ENCODE measurements at regions of chr1 and their contacts with region 1.

Region 1: DNA sequence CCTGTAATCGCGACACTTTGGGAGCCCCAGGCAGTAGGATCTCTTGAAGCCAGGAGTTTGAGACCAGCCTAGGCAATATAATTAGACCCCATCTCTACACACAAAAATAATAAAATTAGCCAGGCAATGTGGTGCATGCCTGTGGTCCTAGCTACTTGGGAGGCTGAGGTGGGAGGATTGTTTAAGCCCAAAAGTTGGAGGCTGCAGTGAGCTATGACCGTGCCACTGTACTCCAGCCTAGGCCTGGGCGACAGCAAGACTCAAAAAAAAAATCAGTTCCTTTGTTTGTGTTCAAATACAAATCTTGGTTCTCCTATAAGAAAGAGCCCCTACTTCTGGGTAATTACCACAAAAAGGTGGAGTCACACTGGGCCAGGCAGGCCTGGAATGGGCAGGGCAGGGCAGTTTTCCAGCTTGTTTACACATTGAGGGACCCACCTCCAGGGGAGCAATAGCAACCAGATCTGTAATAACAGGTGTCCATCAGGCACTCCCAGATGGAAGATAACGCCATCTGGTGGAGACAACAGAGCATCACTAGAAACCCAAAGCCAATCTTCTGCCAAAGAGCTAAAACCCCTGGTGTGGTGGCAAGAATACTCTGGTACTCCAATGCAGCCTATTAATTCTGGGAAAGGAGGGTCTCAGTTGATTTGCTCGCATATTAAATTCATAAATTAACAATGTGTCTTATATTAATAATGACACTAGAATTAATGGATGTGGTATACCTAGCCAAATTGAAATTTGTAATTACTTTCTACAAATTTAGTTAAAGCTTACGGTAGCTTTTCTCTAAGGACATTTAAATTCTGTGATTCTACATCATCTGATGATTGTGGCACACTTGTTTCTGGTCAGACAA is 13.2 kb downstream of the PPP1R15B start:
- DNase-seq: peak; percentile 74 to 82
- H3K4me3 ChIP-seq: no peak overlapping the region
- H3K27ac ChIP-seq: no peak overlapping the region; the same call in 1 of the 2 replicates
- H3K4me1 ChIP-seq: no peaks in the 10 kb centered on the region
- H3K27me3 ChIP-seq: no peaks in the 10 kb centered on the region
- CTCF ChIP-seq: peak; percentile 26 to 98 (median 96)
- EP300 ChIP-seq: peak in 1 of 2 experiments; percentile 57; a peak in 1 of 3 replicates
- POLR2A ChIP-seq: no peak
- RAD21 ChIP-seq: peak; percentile 67 to 84

Region 2: GRCh38 chr1:204368996-204369726 is 29.3 kb before region 1 on chr1:
- CTCF ChIA-PET with region 1: interaction called, 18 read pairs
- POLR2A ChIA-PET with region 1: interaction called, 3 read pairs
- DNase-seq: no peak
- H3K4me3 ChIP-seq: no peak overlapping the region
- H3K27ac ChIP-seq: no peak overlapping the region
- H3K4me1 ChIP-seq: no peaks in the 10 kb centered on the region
- H3K27me3 ChIP-seq: peaks cover 0 to 4% (median 0%) of the 10 kb centered on the region in 4 experiments; a peak in 1 of 7 replicates
- CTCF ChIP-seq: no peak
- EP300 ChIP-seq: no peak
- POLR2A ChIP-seq: no peak
- RAD21 ChIP-seq: no peak

Region 3: GRCh38 chr1:204377795-204378608 is 20.4 kb before region 1 on chr1:
- CTCF ChIA-PET with region 1: interaction called, 31 read pairs
- POLR2A ChIA-PET with region 1: interaction called, 6 read pairs
- DNase-seq: peak in 1 of 2 experiments; percentile 92
- H3K4me3 ChIP-seq: peak overlapping the region; percentile 46 to 87 (median 67)
- H3K27ac ChIP-seq: no peak overlapping the region
- H3K4me1 ChIP-seq: peaks cover 0 to 4% (median 1%) of the 10 kb centered on the region in 4 experiments; a peak in 6 of 7 replicates
- H3K27me3 ChIP-seq: peaks cover 5 to 52% (median 27%) of the 10 kb centered on the region in 4 experiments
- CTCF ChIP-seq: no peak
- EP300 ChIP-seq: no peak
- POLR2A ChIP-seq: peak in 1 of 2 experiments; percentile 25; a peak in 1 of 3 replicates
- RAD21 ChIP-seq: no peak

Region 4: GRCh38 chr1:204384994-204385352 is 13.5 kb before region 1 on chr1:
- CTCF ChIA-PET with region 1: interaction called, 48 read pairs
- POLR2A ChIA-PET with region 1: interaction called, 6 read pairs
- DNase-seq: peak in 1 of 2 experiments; percentile 45
- H3K4me3 ChIP-seq: no peak overlapping the region
- H3K27ac ChIP-seq: no peak overlapping the region
- H3K4me1 ChIP-seq: no peaks in the 10 kb centered on the region; a peak in 1 of 7 replicates
- H3K27me3 ChIP-seq: peaks cover 0 to 6% (median 2%) of the 10 kb centered on the region in 4 experiments; a peak in 5 of 7 replicates
- CTCF ChIP-seq: no peak
- EP300 ChIP-seq: no peak
- POLR2A ChIP-seq: no peak
- RAD21 ChIP-seq: no peak

Region 5: DNA sequence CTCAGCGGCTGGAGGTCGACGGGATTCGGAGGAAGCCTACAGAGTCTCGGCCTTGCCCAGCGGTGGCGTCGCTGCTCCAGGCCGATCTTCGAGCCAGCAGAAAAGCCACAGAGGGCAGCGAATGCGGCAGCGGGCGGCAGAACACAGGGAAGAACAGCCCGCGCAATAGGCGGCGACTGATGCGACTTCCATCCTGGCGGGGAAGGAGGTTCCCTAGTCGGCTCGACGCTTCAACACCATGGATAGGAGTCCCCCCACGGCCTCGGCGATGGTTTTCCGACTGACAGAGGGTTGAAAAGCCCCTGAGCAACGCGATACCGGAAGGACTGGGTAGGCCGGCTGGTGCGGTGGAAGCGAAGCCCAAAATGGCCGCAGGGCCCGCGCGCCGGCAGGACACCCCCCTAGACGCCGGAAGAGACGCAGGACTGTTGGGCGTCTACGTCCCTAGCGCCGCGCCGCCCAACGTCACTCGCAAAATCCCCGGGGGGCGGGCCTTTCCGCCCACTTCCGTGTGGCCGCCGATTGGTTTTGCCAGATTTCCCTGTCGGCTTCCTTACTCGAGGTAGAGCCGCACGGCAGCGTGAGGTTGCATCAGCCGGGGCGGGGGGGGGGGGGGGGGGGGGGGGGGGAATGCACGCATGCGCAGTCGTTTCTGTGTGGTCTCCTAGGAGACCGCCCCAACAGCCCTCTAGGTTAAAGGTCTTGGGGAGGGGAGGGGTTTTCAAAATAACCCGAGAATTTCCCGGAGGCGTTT is 13.2 kb after region 1 on chr1 and contains the start of gene PPP1R15B:
- CTCF ChIA-PET with region 1: interaction called, 36 read pairs
- POLR2A ChIA-PET with region 1: interaction called, 30 read pairs
- DNase-seq: peak; percentile 96 to 100
- H3K4me3 ChIP-seq: peak within 1 kb of the TSS; percentile 63 to 97 (median 95)
- H3K27ac ChIP-seq: peak within 1 kb of the TSS; percentile 95
- H3K4me1 ChIP-seq: peaks cover 0 to 2% (median 0%) of the 10 kb centered on the region in 4 experiments; a peak in 3 of 7 replicates
- H3K27me3 ChIP-seq: no peaks in the 10 kb centered on the region
- CTCF ChIP-seq: no peak
- EP300 ChIP-seq: peak; percentile 85 to 88
- POLR2A ChIP-seq: peak; percentile 77 to 95
- RAD21 ChIP-seq: no peak
- total RNA-seq, gene PPP1R15B: 70.1 and 72.2 TPM in 2 replicates

Region 6: DNA sequence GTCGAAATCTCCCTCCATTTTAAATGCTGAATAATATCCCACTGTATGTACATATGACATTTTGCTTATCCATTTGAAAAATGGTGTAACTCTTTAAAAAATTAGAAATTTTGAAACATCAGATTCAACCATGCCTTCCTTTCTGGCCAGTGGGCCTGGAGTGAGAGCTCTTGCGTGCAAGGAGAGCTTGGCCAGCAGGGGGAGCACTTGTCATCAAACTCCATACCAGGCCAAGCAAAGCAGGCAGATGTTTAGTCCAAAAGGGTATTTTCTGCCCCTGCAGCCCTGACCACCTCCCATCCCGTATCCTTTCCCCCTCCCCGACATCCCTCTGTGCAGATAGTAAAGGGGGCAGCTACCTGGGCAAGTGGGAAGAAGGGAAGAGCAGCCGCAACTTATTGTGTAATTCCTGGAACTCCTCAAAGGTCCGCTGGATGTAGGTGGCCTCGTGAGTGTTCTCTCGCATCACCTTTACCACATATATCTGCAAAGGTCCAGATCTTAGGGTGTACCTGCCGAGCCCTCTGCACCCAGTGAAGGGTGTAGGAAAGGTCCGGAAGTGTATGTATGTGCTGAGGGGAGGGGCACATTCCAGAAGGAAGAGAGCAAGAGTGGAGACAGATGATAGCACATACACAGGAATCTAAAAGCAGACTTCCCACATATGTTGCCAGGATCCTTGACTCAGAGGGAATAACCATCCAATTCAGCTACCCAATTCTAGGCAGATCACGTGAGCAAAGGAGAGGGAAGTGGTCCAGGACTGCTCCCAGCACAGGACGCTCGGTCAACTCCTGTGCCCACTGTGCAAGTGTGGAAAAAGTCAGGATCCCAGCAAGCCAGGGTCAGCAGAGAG is 33.1 kb after region 1 on chr1:
- CTCF ChIA-PET with region 1: interaction called, 10 read pairs
- POLR2A ChIA-PET with region 1: no interaction called
- DNase-seq: peak; percentile 62 to 96
- H3K4me3 ChIP-seq: no peak overlapping the region
- H3K27ac ChIP-seq: no peak overlapping the region
- H3K4me1 ChIP-seq: 0 out of 7 replicates have a peak, but pooled peaks cover 0 to 2% (median 0%) of the 10 kb centered on the region in 4 experiments
- H3K27me3 ChIP-seq: no peaks in the 10 kb centered on the region
- CTCF ChIP-seq: peak; percentile 84 to 95 (median 91)
- EP300 ChIP-seq: no peak
- POLR2A ChIP-seq: no peak
- RAD21 ChIP-seq: peak; percentile 61 to 68

Region 7: GRCh38 chr1:204565617-204566582 is 167.5 kb after region 1 on chr1:
- CTCF ChIA-PET with region 1: no interaction called
- POLR2A ChIA-PET with region 1: no interaction called
- DNase-seq: peak in 1 of 2 experiments; percentile 63
- H3K4me3 ChIP-seq: peak overlapping the region in 1 of 4 experiments; percentile 34; a peak in 2 of 8 replicates
- H3K27ac ChIP-seq: peak overlapping the region; percentile 4; the same call in 1 of the 2 replicates
- H3K4me1 ChIP-seq: peaks cover 3 to 24% (median 13%) of the 10 kb centered on the region in 4 experiments; a peak in 6 of 7 replicates
- H3K27me3 ChIP-seq: no peaks in the 10 kb centered on the region; a peak in 1 of 7 replicates
- CTCF ChIP-seq: peak; percentile 36 to 83 (median 73)
- EP300 ChIP-seq: peak in 1 of 2 experiments; percentile 85; a peak in 1 of 3 replicates
- POLR2A ChIP-seq: no peak
- RAD21 ChIP-seq: peak; percentile 84 to 89